ENCODE measurements at regions of chr9 and their contacts with region 1.

Region 1: GRCh38 chr9:128034821-128035764 is 32.0 kb downstream of the NAIF1 start:
- DNase-seq: peak; percentile 79 to 81
- H3K4me3 ChIP-seq: no peak overlapping the region
- H3K27ac ChIP-seq: no peak overlapping the region
- H3K4me1 ChIP-seq: peaks cover 0 to 3% (median 1%) of the 10 kb centered on the region in 4 experiments; a peak in 4 of 7 replicates
- H3K27me3 ChIP-seq: no peaks in the 10 kb centered on the region
- CTCF ChIP-seq: peak; percentile 62 to 98 (median 93)
- EP300 ChIP-seq: peak in 1 of 2 experiments; percentile 25; a peak in 1 of 3 replicates
- POLR2A ChIP-seq: no peak
- RAD21 ChIP-seq: peak; percentile 98 to 99

Region 2: GRCh38 chr9:127937388-127938280 is 97.5 kb before region 1 on chr9 and contains the start of gene DPM2:
- CTCF ChIA-PET with region 1: interaction called, 825 read pairs
- POLR2A ChIA-PET with region 1: interaction called, 7 read pairs
- DNase-seq: peak in 1 of 2 experiments; percentile 83
- H3K4me3 ChIP-seq: peak within 1 kb of the TSS; percentile 76 to 98 (median 88)
- H3K27ac ChIP-seq: peak within 1 kb of the TSS; percentile 46; the same call in 1 of the 2 replicates
- H3K4me1 ChIP-seq: peaks cover 0 to 19% (median 14%) of the 10 kb centered on the region in 4 experiments; a peak in 6 of 7 replicates
- H3K27me3 ChIP-seq: no peaks in the 10 kb centered on the region
- CTCF ChIP-seq: no peak
- EP300 ChIP-seq: no peak
- POLR2A ChIP-seq: peak in 1 of 2 experiments; percentile 84; a peak in 2 of 3 replicates
- RAD21 ChIP-seq: no peak
- total RNA-seq, gene DPM2: 45.4 and 48.8 TPM in 2 replicates

Region 3: DNA sequence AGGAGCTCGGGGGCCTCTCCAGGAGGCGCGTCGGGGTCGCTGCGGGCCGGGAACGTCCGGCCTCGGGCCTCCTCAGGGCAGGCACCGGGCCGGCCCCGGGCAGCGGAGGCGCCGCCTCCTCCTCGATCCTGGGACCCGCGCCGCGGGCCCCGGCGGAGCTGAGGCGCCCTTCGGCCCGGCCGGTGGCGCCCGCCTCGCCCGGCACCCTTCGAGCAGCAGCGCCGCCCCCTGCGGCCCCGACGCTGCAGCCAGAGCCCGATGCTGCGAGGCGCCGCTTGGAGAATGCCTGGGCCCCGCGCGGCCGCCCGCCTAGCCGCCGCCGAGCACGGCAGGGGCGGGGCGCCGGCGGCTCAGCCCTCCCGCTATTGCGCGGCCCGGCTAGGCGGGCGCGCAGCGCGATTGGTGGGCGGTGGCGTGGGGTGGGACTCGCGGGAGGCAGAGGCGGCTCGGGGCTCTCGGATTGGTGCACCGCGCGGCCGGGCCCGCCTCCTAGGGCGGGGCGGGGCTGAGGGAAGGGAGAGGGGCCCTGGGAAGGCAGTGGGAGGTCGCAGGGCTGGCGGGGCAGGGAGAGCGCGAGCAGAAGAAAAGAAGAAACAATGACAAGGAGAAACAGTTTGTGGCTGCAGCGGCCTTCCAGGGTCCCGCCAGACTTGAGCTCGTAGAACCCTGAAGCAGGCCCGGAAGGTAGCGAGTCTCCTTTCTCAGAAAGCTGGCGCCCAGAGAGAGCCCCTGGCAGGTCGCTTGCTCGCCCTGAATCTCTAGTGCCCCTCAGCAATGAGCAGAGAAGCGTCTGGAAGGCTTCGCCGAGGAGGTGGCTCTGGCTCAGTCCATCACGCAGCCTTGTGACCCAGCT is 54.2 kb before region 1 on chr9 and contains the start of gene EEIG1:
- CTCF ChIA-PET with region 1: interaction called, 49 read pairs
- POLR2A ChIA-PET with region 1: interaction called, 9 read pairs
- DNase-seq: peak; percentile 80 to 97
- H3K4me3 ChIP-seq: peak within 1 kb of the TSS; percentile 88 to 99 (median 93)
- H3K27ac ChIP-seq: peak within 1 kb of the TSS; percentile 79
- H3K4me1 ChIP-seq: peaks cover 4 to 34% (median 24%) of the 10 kb centered on the region in 4 experiments
- H3K27me3 ChIP-seq: no peaks in the 10 kb centered on the region
- CTCF ChIP-seq: no peak; a peak in 1 of 4 replicates
- EP300 ChIP-seq: no peak
- POLR2A ChIP-seq: no peak; a peak in 2 of 3 replicates
- RAD21 ChIP-seq: no peak
- total RNA-seq, gene EEIG1: 50.8 and 51.3 TPM in 2 replicates

Region 4: GRCh38 chr9:128055344-128056040 is 20.4 kb after region 1 on chr9:
- CTCF ChIA-PET with region 1: interaction called, 55 read pairs
- POLR2A ChIA-PET with region 1: interaction called, 3 read pairs
- DNase-seq: no peak
- H3K4me3 ChIP-seq: 0 out of 8 replicates have a peak overlapping the region, but pooled peaks of 1 of the 4 experiments have one; percentile 12
- H3K27ac ChIP-seq: no peak overlapping the region
- H3K4me1 ChIP-seq: peaks cover 0 to 17% (median 13%) of the 10 kb centered on the region in 4 experiments; a peak in 4 of 7 replicates
- H3K27me3 ChIP-seq: no peaks in the 10 kb centered on the region
- CTCF ChIP-seq: no peak
- EP300 ChIP-seq: no peak
- POLR2A ChIP-seq: no peak
- RAD21 ChIP-seq: no peak

Region 5: GRCh38 chr9:128081056-128081455 is 46.0 kb after region 1 on chr9:
- CTCF ChIA-PET with region 1: interaction called, 12 read pairs
- POLR2A ChIA-PET with region 1: interaction called, 3 read pairs
- DNase-seq: no peak
- H3K4me3 ChIP-seq: no peak overlapping the region
- H3K27ac ChIP-seq: no peak overlapping the region
- H3K4me1 ChIP-seq: peaks cover 0 to 5% (median 1%) of the 10 kb centered on the region in 4 experiments; a peak in 3 of 7 replicates
- H3K27me3 ChIP-seq: no peaks in the 10 kb centered on the region
- CTCF ChIP-seq: no peak
- EP300 ChIP-seq: no peak
- POLR2A ChIP-seq: no peak
- RAD21 ChIP-seq: no peak

Region 6: GRCh38 chr9:128103589-128103962 is 68.5 kb after region 1 on chr9:
- CTCF ChIA-PET with region 1: interaction called, 17 read pairs
- POLR2A ChIA-PET with region 1: no interaction called
- DNase-seq: peak in 1 of 2 experiments; percentile 58
- H3K4me3 ChIP-seq: no peak overlapping the region
- H3K27ac ChIP-seq: no peak overlapping the region
- H3K4me1 ChIP-seq: peaks cover 11 to 21% (median 15%) of the 10 kb centered on the region in 4 experiments
- H3K27me3 ChIP-seq: no peaks in the 10 kb centered on the region
- CTCF ChIP-seq: peak in 2 of 3 experiments; percentile 37 to 43; a peak in 3 of 4 replicates
- EP300 ChIP-seq: no peak
- POLR2A ChIP-seq: no peak; a peak in 1 of 3 replicates
- RAD21 ChIP-seq: peak; percentile 26 to 51; a peak in 3 of 4 replicates

Measured in H1 (cell line).